Sciatic nerve (tissue), 2 donors: ENCODE measurements at regions of chr3 and their contacts with region 1.

Region 1: GRCh38 chr3:53144862-53145712 is 14.9 kb upstream of the RFT1 start:
- DNase-seq: no peak
- ATAC-seq: no peak

Region 2: DNA sequence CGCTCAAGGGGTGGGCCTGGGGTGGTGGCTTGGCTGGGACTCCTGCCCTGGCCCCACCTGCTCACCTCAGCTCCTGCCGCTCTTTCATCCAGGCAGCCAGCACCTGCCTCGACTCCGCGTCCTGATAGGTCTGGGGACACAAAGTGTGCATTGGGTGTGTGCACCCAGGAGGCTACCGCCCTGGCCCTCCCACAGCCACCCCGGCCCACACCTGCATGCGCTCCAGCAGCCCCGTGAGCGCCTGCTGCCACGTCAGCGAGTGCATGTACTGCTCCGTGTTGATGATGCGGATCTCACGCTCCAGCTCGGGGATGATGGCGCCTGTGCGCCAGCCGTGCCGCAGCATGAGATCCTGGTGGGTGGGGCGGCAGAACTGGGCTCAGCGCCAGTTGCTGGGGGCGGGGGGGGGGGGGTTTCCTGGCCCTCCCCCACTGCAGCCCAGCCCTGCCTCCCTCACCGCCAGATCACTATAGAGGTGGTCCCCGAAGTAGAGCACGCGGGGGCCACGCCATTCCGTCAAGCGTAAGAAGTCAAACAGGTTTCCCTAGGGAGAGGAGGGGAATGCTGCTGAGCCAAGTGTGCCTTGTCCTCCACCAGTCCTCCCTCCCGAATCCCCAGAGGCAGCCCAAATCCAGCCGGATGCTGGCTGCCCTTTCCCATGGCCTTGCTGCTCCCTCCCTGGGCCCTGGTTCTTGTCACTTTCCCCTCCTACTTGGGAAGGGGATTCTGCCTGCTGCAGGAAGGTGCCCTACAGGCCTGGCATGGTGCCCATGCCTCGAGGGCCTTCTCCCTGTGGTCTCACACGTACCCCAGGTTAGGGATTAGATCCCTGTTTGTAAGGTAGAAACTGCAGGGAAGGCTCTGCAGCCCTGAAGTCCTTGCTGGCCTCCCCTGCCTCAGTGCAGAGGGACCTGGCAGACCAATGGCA is 620.1 kb before region 1 on chr3:
- intact Hi-C with region 1: no loop called
- DNase-seq: peak; percentile 61
- ATAC-seq: peak; percentile 4

Region 3: GRCh38 chr3:53635041-53635440 is 490.0 kb after region 1 on chr3:
- intact Hi-C with region 1: loop called (anchors 5 kb)
- DNase-seq: no peak
- ATAC-seq: no peak